Activated naive CD4-positive, alpha-beta T cell treated with anti-CD3 and anti-CD28 coated beads for 36 hours (primary cell): ENCODE measurements at regions of chrX and their contacts with region 1.

Region 1: DNA sequence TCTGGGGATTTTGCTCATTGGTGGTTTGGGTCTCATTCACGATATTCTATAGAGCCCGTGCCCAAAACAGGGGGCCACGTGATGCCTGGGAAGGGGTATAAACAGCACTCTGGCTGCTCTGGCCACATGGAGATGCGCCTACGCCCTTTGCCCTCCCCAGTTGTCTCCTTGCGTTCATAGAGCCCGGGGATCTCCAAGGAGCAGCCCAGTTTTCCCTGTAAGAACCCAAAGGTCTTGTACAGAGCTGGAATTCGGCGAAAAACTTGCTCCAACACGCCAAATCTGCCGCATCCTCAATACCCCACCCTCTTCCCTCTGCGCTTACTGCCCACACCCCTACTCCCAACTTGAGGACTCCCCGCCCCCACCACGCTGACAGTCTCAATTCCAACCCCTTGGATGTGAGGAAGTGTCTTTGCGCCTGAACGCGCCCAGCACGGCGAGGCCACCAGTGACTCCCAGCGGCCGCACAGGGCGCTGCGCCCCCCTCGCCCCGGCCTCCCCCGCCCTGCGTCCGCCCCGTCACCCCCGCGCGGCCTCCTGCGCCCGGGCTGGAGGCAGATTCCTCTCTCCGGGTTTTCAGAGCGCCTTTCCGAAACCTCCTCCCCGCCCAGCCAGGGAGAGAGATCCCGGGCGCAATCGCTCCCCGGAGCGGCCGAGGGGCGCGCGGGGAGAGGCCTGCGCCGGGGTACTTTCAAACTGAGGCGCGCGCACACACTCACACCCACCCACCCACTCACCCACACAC is at the start of gene NHS:
- DNase-seq: peak; percentile 40
- H3K4me3 Mint-ChIP-seq: peak within 1 kb of the TSS; percentile 24
- H3K27ac Mint-ChIP-seq: no peak within 1 kb of the TSS
- H3K4me1 Mint-ChIP-seq: peaks cover 11% of the 10 kb centered on the region
- H3K27me3 Mint-ChIP-seq: peaks cover 21% of the 10 kb centered on the region
- total RNA-seq, gene NHS: 7.8 to 8.9 TPM

Region 2: GRCh38 chrX:16290997-16291396 is 1083.8 kb before region 1 on chrX:
- CTCF ChIA-PET with region 1: no interaction called
- intact Hi-C with region 1: no loop called
- DNase-seq: no peak
- H3K4me3 Mint-ChIP-seq: no peak overlapping the region
- H3K27ac Mint-ChIP-seq: no peak overlapping the region
- H3K4me1 Mint-ChIP-seq: no peaks in the 10 kb centered on the region
- H3K27me3 Mint-ChIP-seq: no peaks in the 10 kb centered on the region

Region 3: DNA sequence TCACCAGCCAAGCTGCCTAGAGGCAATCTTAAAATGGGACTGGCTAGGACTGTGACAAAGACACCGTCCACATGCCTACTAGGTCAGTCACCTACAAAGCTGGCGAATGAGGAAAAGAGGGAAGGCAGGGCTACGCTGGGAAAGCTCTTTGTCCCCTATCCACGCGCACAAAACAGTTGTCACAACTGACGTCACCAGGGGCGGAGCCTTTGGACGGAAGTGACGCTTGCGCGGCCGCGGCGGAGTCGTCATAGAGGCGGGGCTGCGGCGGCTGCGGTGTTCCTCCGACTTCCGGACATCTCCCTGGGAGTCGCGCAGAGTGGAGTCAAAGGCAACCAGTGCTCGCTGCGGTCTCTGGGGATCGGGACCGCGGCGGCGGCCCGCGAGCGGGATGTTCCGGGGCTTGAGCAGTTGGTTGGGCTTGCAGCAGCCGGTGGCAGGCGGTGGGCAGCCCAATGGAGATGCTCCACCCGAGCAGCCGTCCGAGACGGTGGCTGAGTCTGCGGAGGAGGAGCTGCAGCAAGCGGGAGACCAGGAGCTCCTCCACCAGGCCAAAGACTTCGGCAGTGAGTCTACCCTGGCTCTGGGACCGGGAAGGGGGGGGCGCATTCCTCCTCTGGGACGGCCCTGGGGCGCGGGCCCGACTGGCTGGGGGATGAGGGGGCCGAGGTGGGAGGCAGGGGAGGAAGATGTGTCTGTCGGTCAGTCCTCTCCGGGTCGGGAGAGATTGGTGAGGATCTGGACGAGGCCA is 655.3 kb before region 1 on chrX and contains the start of gene SYAP1:
- CTCF ChIA-PET with region 1: no interaction called
- intact Hi-C with region 1: loop called (anchors 5 kb)
- DNase-seq: peak; percentile 93
- H3K4me3 Mint-ChIP-seq: peak within 1 kb of the TSS; percentile 89
- H3K27ac Mint-ChIP-seq: peak within 1 kb of the TSS; percentile 92
- H3K4me1 Mint-ChIP-seq: peaks cover 33% of the 10 kb centered on the region
- H3K27me3 Mint-ChIP-seq: no peaks in the 10 kb centered on the region
- total RNA-seq, gene SYAP1: 17.1 to 18.9 TPM

Region 4: DNA sequence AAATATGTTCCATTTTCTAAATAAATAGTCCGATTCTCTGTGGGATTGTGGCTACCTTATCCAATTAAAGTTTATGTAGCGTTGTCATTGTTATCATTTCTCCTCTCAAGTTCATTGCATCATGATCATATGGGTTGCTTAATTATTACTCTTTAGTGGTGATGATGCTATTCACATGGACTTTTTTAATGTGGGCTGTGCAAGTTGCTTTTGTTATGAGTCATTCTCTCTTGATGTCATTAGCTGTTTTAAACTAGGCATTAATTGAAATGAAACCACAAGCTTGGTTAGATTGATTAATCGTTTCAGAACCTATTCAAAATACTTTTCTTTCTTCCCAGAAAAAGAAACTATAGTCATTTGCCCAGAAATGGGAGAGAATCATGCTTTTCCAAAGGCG is 38.4 kb after region 1 on chrX:
- CTCF ChIA-PET with region 1: no interaction called
- intact Hi-C with region 1: loop called (anchors 1 kb)
- DNase-seq: no peak
- H3K4me3 Mint-ChIP-seq: no peak overlapping the region
- H3K27ac Mint-ChIP-seq: peak overlapping the region; percentile 7
- H3K4me1 Mint-ChIP-seq: peaks cover 28% of the 10 kb centered on the region
- H3K27me3 Mint-ChIP-seq: peaks cover 15% of the 10 kb centered on the region

Region 5: DNA sequence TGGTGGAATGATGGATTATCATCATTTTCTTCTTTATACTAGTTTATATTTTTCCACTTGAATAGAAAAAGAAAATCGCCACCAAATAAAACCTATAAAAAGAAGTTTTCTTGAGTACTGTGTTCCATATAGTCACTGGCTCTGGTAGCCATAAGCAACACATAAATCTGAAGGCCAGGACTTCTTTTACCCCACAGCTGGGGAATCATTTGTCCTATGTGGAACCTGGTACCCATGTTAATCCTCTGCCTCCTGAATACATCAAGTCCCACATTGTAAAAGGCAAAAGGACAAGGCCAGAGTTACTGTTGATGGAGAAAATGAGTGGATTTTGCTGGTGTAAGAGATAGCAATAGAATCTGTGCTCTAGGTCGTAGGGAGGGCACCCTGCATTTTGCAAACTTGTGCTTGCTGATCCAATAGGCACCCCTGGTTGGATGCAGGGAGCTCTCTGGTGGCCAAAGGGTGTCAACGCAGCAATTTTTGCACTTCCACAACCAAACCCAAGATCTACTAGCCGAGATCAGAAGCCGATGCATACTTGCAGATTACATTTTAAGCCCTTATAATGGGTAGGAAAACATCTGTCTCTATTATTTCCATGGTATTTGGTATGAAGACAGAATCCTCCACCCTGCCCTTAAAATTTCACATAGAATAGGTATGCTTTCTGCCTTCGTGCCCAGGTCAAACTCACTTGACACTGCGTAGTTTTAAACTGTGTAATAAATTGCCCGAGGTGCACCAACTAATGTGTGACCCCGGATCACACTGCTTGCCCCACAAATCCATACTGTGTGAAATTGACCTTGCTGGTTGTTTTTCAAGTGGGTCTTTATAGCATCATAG is 216.3 kb after region 1 on chrX:
- CTCF ChIA-PET with region 1: no interaction called
- intact Hi-C with region 1: loop called (anchors 1 kb)
- DNase-seq: peak; percentile 70
- H3K4me3 Mint-ChIP-seq: no peak overlapping the region
- H3K27ac Mint-ChIP-seq: peak overlapping the region; percentile 82
- H3K4me1 Mint-ChIP-seq: peaks cover 44% of the 10 kb centered on the region
- H3K27me3 Mint-ChIP-seq: peaks cover 2% of the 10 kb centered on the region

Region 6: DNA sequence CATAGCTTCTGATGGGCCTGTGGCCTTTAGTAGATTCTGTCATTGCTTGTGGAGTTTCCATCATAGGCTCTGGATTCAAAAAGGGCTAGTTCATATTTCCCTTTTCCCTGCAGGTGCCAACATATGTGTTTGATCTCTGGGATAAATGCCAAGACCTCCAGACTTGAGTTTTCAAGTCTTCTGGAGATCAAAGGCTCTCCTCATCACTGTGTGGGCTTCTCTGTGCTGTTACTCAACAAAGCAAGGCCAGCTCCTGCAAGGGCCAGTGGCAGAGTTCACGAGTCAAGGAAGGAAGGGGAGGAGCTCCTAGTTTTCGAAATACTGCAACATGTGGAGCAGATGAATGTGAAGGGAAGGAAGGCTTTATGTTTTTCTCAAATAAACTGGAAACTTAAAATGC is 299.8 kb after region 1 on chrX:
- CTCF ChIA-PET with region 1: no interaction called
- intact Hi-C with region 1: no loop called
- DNase-seq: no peak
- H3K4me3 Mint-ChIP-seq: no peak overlapping the region
- H3K27ac Mint-ChIP-seq: no peak overlapping the region
- H3K4me1 Mint-ChIP-seq: peaks cover 15% of the 10 kb centered on the region
- H3K27me3 Mint-ChIP-seq: no peaks in the 10 kb centered on the region

Region 7: DNA sequence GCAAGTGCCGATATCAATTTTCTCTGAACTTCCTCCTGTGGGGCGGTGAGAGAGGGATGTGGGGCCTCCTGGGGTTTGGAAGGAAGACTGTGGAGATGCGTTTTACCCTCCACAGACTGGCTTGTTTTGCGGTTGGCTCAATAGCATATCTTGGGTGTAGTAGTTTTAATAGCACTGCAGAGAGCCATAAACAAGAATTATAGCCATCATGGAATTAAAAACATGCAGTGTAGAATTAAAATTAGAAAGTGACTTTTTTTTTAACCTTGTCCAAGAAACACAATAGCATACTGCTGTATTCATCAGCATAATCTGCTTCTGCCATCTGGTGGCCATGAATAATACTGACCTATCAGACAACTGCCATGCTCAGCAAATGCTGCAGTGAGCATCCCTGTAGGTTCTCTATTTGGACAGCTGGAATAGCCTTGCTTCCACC is 315.2 kb after region 1 on chrX:
- CTCF ChIA-PET with region 1: no interaction called
- intact Hi-C with region 1: loop called (anchors 5 kb)
- DNase-seq: peak; percentile 69
- H3K4me3 Mint-ChIP-seq: no peak overlapping the region
- H3K27ac Mint-ChIP-seq: no peak overlapping the region
- H3K4me1 Mint-ChIP-seq: peaks cover 6% of the 10 kb centered on the region
- H3K27me3 Mint-ChIP-seq: no peaks in the 10 kb centered on the region